ENCODE measurements at regions of chr5 and their contacts with region 1.

Region 1: GRCh38 chr5:68215208-68215897 is at the start of gene PIK3R1:
- DNase-seq: peak; percentile 96
- ATAC-seq: peak; percentile 83
- H3K4me3 Mint-ChIP-seq: peak within 1 kb of the TSS; percentile 95
- H3K27ac Mint-ChIP-seq: peak within 1 kb of the TSS; percentile 96
- H3K4me1 Mint-ChIP-seq: peaks cover 43% of the 10 kb centered on the region
- H3K27me3 Mint-ChIP-seq: no peaks in the 10 kb centered on the region
- CTCF ChIP-seq: no peak
- total RNA-seq, gene PIK3R1: 45.5 and 52.2 TPM in 2 replicates

Region 2: GRCh38 chr5:67215583-67216471 is 999.5 kb before region 1 on chr5:
- CTCF ChIA-PET with region 1: no interaction called
- POLR2A ChIA-PET with region 1: interaction called, 14 read pairs
- intact Hi-C with region 1: no loop called
- DNase-seq: peak; percentile 70
- ATAC-seq: peak; percentile 98
- H3K4me3 Mint-ChIP-seq: peak overlapping the region; percentile 76
- H3K27ac Mint-ChIP-seq: peak overlapping the region; percentile 98
- H3K4me1 Mint-ChIP-seq: peaks cover 58% of the 10 kb centered on the region
- H3K27me3 Mint-ChIP-seq: no peaks in the 10 kb centered on the region
- CTCF ChIP-seq: no peak

Region 3: DNA sequence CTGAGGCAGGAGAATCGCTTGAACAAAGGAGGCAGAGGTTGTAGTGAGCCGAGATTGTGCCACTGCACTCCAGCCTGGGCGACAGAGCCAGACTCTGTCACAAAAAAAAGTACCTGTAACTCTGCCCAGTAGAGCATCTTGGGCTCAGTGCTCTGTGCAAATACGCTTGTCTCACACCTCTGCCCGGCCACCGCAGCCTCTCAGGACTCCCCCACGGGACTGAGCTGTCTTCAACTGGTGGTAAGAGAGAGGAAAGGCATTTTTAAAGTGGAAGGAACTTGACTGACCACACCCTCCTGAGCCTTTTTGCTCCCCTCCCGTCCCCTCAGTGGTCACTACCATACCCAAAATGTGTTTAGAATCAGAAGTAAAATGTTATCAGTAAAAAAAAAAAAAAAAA is 174.1 kb before region 1 on chr5:
- CTCF ChIA-PET with region 1: interaction called, 3 read pairs
- POLR2A ChIA-PET with region 1: interaction called, 43 read pairs
- intact Hi-C with region 1: loop called (anchors 1 kb)
- DNase-seq: no peak
- ATAC-seq: peak; percentile 87
- H3K4me3 Mint-ChIP-seq: peak overlapping the region; percentile 67
- H3K27ac Mint-ChIP-seq: peak overlapping the region; percentile 80
- H3K4me1 Mint-ChIP-seq: peaks cover 31% of the 10 kb centered on the region
- H3K27me3 Mint-ChIP-seq: no peaks in the 10 kb centered on the region
- CTCF ChIP-seq: no peak

Region 4: DNA sequence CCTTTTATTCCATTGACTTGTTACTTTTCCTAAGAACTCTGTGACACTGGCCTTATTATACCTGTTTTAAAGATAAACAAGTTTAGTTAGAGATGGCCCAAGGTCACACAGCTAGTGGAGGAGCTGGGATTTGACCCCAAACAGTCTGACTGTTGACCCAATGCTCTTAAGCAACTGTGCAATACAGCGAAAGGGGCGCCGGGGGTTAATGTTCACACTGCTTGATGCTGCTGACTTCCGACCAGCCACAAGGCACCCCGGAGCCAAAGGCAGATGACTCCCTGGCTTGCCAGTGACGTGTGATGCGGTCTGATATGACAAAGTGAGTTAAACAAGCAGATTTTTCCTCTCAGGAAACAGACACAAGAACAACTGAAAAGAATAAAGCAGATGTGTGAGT is 24.1 kb after region 1 on chr5:
- CTCF ChIA-PET with region 1: interaction called, 5 read pairs
- POLR2A ChIA-PET with region 1: interaction called, 51 read pairs
- intact Hi-C with region 1: loop called (anchors 1 kb)
- DNase-seq: peak; percentile 39
- ATAC-seq: peak; percentile 84
- H3K4me3 Mint-ChIP-seq: peak overlapping the region; percentile 71
- H3K27ac Mint-ChIP-seq: peak overlapping the region; percentile 82
- H3K4me1 Mint-ChIP-seq: peaks cover 76% of the 10 kb centered on the region
- H3K27me3 Mint-ChIP-seq: no peaks in the 10 kb centered on the region
- CTCF ChIP-seq: no peak

Region 5: GRCh38 chr5:68252673-68253623 is 37.6 kb after region 1 on chr5:
- CTCF ChIA-PET with region 1: interaction called, 24 read pairs
- POLR2A ChIA-PET with region 1: interaction called, 12 read pairs
- intact Hi-C with region 1: loop called (anchors 1 kb)
- DNase-seq: no peak
- ATAC-seq: peak; percentile 75
- H3K4me3 Mint-ChIP-seq: no peak overlapping the region
- H3K27ac Mint-ChIP-seq: no peak overlapping the region
- H3K4me1 Mint-ChIP-seq: peaks cover 83% of the 10 kb centered on the region
- H3K27me3 Mint-ChIP-seq: no peaks in the 10 kb centered on the region
- CTCF ChIP-seq: no peak